Common myeloid progenitor, CD34-positive (primary cell): ENCODE measurements at regions of chr3 and their contacts with region 1.

Region 1: GRCh38 chr3:120245386-120245785 is 39.6 kb downstream of the GPR156 start:
- DNase-seq: no peak
- H3K4me3 ChIP-seq: no peak overlapping the region
- H3K27ac ChIP-seq: no peak overlapping the region
- H3K4me1 ChIP-seq: no peaks in the 10 kb centered on the region
- H3K27me3 ChIP-seq: no peaks in the 10 kb centered on the region

Region 2: DNA sequence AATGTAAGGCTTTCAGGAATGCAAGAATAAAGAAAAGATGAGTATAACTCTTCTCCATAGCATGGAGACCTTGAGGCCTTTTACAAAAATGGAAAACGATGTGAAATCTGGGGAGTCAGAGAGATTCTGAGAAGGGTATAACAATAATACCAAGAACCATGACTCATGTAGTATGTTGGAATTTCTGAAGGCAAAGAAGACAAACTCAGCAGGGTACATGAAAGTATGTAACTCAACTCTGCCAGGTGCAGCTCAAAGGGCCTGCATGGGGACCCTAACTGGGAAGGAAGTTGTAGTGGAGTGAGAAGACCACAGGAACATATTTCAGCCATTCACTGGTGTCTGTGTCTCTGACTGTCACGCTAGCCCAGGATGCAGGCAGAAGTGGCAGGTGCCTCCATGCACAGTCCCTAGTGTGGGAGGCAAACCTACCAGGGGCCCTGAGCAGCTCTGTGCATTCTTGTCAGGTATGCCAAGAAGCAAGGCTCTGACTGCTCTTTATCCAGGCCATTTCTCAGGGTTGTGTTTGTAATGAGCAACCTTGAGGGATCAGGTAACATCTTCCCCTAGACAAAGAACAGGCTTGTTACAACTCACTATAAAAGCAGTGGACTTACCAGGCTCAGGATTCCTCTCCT is 17.6 kb before region 1 on chr3:
- CTCF ChIA-PET with region 1: interaction called, 13 read pairs
- POLR2A ChIA-PET with region 1: no interaction called
- DNase-seq: peak in 2 of 3 donors; percentile 6 to 31
- H3K4me3 ChIP-seq: no peak overlapping the region
- H3K27ac ChIP-seq: no peak overlapping the region
- H3K4me1 ChIP-seq: peaks cover 0 to 18% (median 1%) of the 10 kb centered on the region in 4 experiments
- H3K27me3 ChIP-seq: no peaks in the 10 kb centered on the region

Region 3: DNA sequence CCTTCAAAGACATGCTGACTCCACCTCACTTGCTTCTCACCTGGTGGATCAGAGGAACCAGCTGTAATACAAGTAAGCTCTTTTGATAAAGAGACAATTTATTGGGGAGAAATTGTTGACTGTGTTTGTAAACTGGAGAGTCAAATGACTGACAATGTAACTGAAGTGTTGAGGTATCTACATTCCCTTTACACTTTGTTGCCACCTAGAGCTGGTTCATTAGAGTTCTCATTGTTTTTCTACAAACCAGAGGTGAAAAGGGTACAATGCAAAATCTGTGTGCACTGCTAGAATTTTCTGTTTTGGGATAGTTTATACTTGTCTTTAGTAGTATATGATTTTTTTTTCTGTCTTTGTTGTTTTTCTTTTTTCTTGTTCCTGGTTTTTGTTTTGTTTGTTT is 112.4 kb after region 1 on chr3:
- CTCF ChIA-PET with region 1: interaction called, 13 read pairs
- POLR2A ChIA-PET with region 1: no interaction called
- DNase-seq: peak in 2 of 3 donors; percentile 15 to 16
- H3K4me3 ChIP-seq: no peak overlapping the region
- H3K27ac ChIP-seq: no peak overlapping the region
- H3K4me1 ChIP-seq: peaks cover 0 to 2% (median 0%) of the 10 kb centered on the region in 4 experiments
- H3K27me3 ChIP-seq: peaks cover 0 to 3% (median 0%) of the 10 kb centered on the region in 5 experiments

Region 4: DNA sequence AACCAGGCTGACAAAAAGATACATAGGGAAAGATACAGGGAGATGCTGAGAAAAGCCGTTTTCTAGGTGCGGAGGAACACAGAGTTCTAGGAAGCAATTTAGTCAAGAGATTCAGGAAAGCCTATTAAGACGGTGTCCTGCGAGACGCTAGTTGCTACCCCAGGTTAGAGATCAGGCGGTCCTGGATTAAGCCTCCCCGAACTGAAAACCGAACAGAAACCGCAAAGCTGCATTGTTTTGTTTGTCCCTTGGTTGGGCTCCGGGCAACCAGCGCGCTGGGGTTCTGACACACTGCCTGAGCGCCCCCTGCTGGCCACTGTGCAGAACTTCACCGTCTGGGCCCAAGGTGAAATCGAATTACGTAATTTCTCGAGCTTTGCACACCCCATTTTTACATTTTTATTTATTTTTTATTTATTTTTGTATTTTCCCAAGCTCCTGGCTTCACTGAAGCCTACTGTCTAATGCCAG is 313.4 kb after region 1 on chr3:
- CTCF ChIA-PET with region 1: interaction called, 13 read pairs
- POLR2A ChIA-PET with region 1: interaction called, 3 read pairs
- DNase-seq: peak; percentile 97 to 98 (median 98)
- H3K4me3 ChIP-seq: peak overlapping the region; percentile 8 to 77 (median 63)
- H3K27ac ChIP-seq: peak overlapping the region; percentile 92 to 96
- H3K4me1 ChIP-seq: peaks cover 4 to 26% (median 22%) of the 10 kb centered on the region in 4 experiments
- H3K27me3 ChIP-seq: no peaks in the 10 kb centered on the region